Transverse colon (tissue), 4 donors: ENCODE measurements at regions of chr3 and their contacts with region 1.

Region 1: GRCh38 chr3:4763604-4764247 is 215.5 kb upstream of the BHLHE40 start:
- DNase-seq: no peak
- H3K4me3 ChIP-seq: no peak overlapping the region
- H3K27ac ChIP-seq: no peak overlapping the region
- H3K4me1 ChIP-seq: peaks cover 3 to 9% (median 8%) of the 10 kb centered on the region in 4 donors
- H3K27me3 ChIP-seq: no peaks in the 10 kb centered on the region
- CTCF ChIP-seq: no peak
- EP300 ChIP-seq: no peak
- POLR2A ChIP-seq: no peak

Region 2: DNA sequence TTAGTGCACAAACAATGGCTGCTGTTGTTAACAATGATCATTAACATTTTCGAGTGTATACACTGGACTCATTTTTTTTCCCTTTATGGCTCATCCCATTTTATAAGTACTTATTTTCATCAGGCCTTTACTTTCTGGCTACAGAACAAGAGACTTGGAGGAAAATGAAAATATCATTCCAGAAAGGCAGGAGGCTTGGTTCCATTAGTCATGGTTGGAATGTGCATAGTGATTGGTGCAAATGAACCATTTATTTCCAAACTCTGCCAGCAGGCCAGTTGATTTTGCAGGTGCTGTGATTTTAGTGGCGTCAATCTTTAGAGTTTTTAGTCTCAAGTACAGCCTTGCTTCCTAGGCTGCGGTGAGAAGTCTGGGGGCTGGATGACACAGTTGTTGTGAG is 118.8 kb before region 1 on chr3:
- in situ Hi-C with region 1: no loop called
- intact Hi-C with region 1: no loop called
- DNase-seq: no peak
- H3K4me3 ChIP-seq: no peak overlapping the region
- H3K27ac ChIP-seq: no peak overlapping the region
- H3K4me1 ChIP-seq: no peaks in the 10 kb centered on the region
- H3K27me3 ChIP-seq: no peaks in the 10 kb centered on the region
- CTCF ChIP-seq: no peak
- EP300 ChIP-seq: no peak
- POLR2A ChIP-seq: no peak

Region 3: GRCh38 chr3:4799266-4800256 is 35.8 kb after region 1 on chr3:
- in situ Hi-C with region 1: no loop called
- intact Hi-C with region 1: loop called (anchors 2 kb)
- DNase-seq: no peak
- H3K4me3 ChIP-seq: no peak overlapping the region
- H3K27ac ChIP-seq: no peak overlapping the region
- H3K4me1 ChIP-seq: no peaks in the 10 kb centered on the region
- H3K27me3 ChIP-seq: no peaks in the 10 kb centered on the region
- CTCF ChIP-seq: no peak
- EP300 ChIP-seq: no peak
- POLR2A ChIP-seq: no peak

Region 4: DNA sequence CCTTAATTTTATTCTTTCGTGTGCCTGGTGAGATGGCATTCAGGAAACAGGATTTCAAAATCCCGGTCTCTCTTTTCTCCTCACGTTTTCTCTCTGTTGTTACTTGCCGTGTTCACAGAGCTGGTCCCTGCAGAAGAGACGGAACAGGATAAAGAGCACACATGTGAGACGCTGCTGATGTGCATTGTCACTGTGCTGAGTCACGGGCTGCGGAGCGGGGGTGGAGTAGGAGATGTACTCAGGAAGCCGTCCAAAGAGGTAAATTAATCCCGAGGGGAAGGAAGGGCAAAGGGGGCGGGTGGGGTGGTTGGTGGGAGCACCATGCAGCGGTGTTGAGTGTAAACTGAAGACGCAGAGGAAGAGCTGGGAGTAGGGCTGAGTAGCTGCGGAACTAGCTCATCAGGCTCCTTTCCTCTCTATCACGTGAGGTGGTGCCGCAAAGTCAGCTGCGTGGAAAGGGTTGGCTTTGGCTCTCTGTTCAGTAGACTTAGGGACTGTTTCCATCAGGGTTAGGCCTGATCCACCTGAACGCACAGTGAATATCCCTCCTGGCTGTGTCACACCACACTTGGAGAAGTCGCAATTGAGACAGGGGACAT is 50.7 kb after region 1 on chr3:
- in situ Hi-C with region 1: no loop called
- intact Hi-C with region 1: loop called (anchors 1 kb)
- DNase-seq: no peak
- H3K4me3 ChIP-seq: no peak overlapping the region
- H3K27ac ChIP-seq: no peak overlapping the region
- H3K4me1 ChIP-seq: no peaks in the 10 kb centered on the region
- H3K27me3 ChIP-seq: no peaks in the 10 kb centered on the region
- CTCF ChIP-seq: no peak
- EP300 ChIP-seq: no peak
- POLR2A ChIP-seq: no peak